WTC11 (cell line): ENCODE measurements at regions of chr20 and their contacts with region 1.

Region 1: GRCh38 chr20:47379433-47380150 is 23.1 kb upstream of the ZMYND8 start:
- DNase-seq: no peak
- ATAC-seq: no peak
- H3K4me3 Mint-ChIP-seq: no peak overlapping the region
- H3K27ac Mint-ChIP-seq: peak overlapping the region; percentile 58
- H3K4me1 Mint-ChIP-seq: peaks cover 31% of the 10 kb centered on the region
- H3K27me3 Mint-ChIP-seq: no peaks in the 10 kb centered on the region; the same call in 1 of the 2 replicates
- CTCF ChIP-seq: no peak

Region 2: GRCh38 chr20:47205577-47206498 is 173.8 kb before region 1 on chr20:
- CTCF ChIA-PET with region 1: interaction called, 104 read pairs
- POLR2A ChIA-PET with region 1: no interaction called
- DNase-seq: peak; percentile 78
- ATAC-seq: peak; percentile 74
- H3K4me3 Mint-ChIP-seq: no peak overlapping the region
- H3K27ac Mint-ChIP-seq: peak overlapping the region; percentile 6
- H3K4me1 Mint-ChIP-seq: peaks cover 21% of the 10 kb centered on the region
- H3K27me3 Mint-ChIP-seq: no peaks in the 10 kb centered on the region
- CTCF ChIP-seq: peak; percentile 83

Region 3: GRCh38 chr20:47252879-47253307 is 126.7 kb before region 1 on chr20:
- CTCF ChIA-PET with region 1: interaction called, 16 read pairs
- POLR2A ChIA-PET with region 1: no interaction called
- DNase-seq: no peak
- ATAC-seq: no peak
- H3K4me3 Mint-ChIP-seq: no peak overlapping the region
- H3K27ac Mint-ChIP-seq: peak overlapping the region; percentile 86; the same call in 1 of the 2 replicates
- H3K4me1 Mint-ChIP-seq: no peaks in the 10 kb centered on the region
- H3K27me3 Mint-ChIP-seq: no peaks in the 10 kb centered on the region
- CTCF ChIP-seq: no peak

Region 4: GRCh38 chr20:47290008-47290407 is 89.6 kb before region 1 on chr20:
- CTCF ChIA-PET with region 1: interaction called, 57 read pairs
- POLR2A ChIA-PET with region 1: interaction called, 3 read pairs
- DNase-seq: no peak
- ATAC-seq: no peak
- H3K4me3 Mint-ChIP-seq: no peak overlapping the region
- H3K27ac Mint-ChIP-seq: no peak overlapping the region
- H3K4me1 Mint-ChIP-seq: peaks cover 17% of the 10 kb centered on the region
- H3K27me3 Mint-ChIP-seq: no peaks in the 10 kb centered on the region
- CTCF ChIP-seq: no peak

Region 5: GRCh38 chr20:47330933-47331864 is 48.4 kb before region 1 on chr20:
- CTCF ChIA-PET with region 1: interaction called, 26 read pairs
- POLR2A ChIA-PET with region 1: interaction called, 3 read pairs
- DNase-seq: no peak
- ATAC-seq: no peak
- H3K4me3 Mint-ChIP-seq: no peak overlapping the region
- H3K27ac Mint-ChIP-seq: peak overlapping the region; percentile 85
- H3K4me1 Mint-ChIP-seq: peaks cover 76% of the 10 kb centered on the region
- H3K27me3 Mint-ChIP-seq: no peaks in the 10 kb centered on the region
- CTCF ChIP-seq: no peak

Region 6: GRCh38 chr20:47400685-47401084 is 21.1 kb after region 1 on chr20:
- CTCF ChIA-PET with region 1: interaction called, 10 read pairs
- POLR2A ChIA-PET with region 1: interaction called, 6 read pairs
- DNase-seq: no peak
- ATAC-seq: peak; percentile 59
- H3K4me3 Mint-ChIP-seq: no peak overlapping the region
- H3K27ac Mint-ChIP-seq: no peak overlapping the region
- H3K4me1 Mint-ChIP-seq: no peaks in the 10 kb centered on the region
- H3K27me3 Mint-ChIP-seq: no peaks in the 10 kb centered on the region
- CTCF ChIP-seq: no peak

Region 7: GRCh38 chr20:47475419-47476044 is 95.9 kb after region 1 on chr20:
- CTCF ChIA-PET with region 1: no interaction called
- POLR2A ChIA-PET with region 1: no interaction called
- DNase-seq: no peak
- ATAC-seq: no peak
- H3K4me3 Mint-ChIP-seq: no peak overlapping the region
- H3K27ac Mint-ChIP-seq: no peak overlapping the region
- H3K4me1 Mint-ChIP-seq: no peaks in the 10 kb centered on the region
- H3K27me3 Mint-ChIP-seq: no peaks in the 10 kb centered on the region
- CTCF ChIP-seq: no peak